Left ventricle myocardium superior (tissue), 1 donor: ENCODE measurements at regions of chr9 and their contacts with region 1.

Region 1: DNA sequence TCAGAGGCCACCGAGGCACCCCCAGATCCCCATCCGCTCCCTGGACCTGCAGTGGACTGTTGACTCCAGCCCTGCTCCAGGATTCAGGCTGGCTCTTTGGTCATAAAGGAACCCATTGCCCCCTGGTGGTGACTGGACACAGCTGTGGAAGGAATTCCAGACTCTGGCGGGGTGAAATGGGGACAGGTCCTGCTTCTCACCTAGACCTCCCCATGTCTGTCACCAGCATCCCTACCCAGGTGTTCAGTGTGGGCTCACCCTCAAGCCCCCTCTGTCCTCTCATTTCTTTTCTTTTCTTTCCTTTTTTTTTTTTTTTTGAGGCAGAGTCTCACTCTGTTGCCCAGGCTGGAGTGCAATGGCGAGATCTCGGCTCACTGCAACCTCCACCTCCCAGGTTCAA is 25.5 kb upstream of the STXBP1 start:
- DNase-seq: peak; percentile 77
- ATAC-seq: peak; percentile 92

Region 2: DNA sequence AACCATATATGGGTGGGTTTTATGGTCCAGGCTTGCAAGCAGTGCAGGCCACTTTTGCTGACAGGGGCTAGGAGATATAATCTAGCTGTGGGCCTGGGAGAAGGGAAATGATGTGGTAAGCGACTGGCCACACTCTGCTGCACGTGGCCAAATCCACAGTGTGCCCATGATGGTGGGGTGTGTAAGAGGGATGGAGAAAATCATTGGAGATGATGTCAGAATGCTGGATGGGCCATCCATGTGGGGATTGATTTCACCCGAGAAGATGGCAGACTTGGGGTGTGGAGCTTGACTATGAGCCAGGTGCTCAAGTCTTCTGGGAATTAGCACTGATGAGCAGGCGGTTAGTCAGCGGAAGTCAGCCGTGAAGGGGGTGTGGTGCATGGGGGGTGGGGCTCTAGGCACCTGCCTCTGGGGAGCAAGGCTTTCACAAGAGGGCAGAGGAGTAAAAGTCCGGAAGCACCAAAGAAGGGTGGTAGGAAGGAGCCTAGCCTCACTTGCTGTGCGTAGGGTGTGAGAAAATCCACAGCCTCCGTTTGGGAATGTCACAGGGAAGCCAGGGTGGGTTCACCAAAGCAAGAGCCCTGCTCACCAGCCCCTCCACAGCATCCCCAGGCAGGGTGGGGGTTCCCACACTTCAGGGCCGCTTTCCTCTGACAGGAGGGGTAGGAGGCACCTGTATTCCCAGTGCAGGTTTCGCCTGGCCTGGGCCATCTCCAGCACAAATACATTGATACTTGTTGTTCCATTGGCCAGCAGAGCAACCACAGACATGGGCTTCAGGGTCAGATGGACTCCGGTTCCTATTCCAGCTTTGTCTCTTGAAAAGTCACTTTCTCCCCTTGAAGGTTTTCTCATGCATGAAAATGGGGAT is 419.6 kb before region 1 on chr9:
- intact Hi-C with region 1: no loop called
- DNase-seq: no peak
- ATAC-seq: no peak

Region 3: DNA sequence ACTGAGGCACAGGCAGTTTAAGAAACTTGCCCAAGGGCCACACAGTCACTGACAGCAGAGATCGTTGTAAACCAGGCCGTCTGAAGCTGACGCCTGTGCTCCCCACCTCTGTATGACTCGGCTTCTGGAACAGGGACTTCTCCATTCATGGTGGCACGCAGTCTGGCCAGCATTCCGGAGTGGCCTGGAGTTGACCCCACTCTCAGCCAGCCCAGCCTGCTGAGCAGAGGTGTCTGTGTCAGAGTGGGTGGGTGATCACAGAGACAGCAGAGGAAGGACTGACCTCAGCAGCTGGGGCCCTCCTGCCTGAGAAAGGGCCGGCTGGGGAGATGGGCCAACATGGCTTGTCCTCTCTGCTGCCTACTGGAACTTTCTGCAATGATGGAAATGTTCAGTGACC is 122.6 kb before region 1 on chr9:
- intact Hi-C with region 1: no loop called
- DNase-seq: peak; percentile 74
- ATAC-seq: peak; percentile 92

Region 4: DNA sequence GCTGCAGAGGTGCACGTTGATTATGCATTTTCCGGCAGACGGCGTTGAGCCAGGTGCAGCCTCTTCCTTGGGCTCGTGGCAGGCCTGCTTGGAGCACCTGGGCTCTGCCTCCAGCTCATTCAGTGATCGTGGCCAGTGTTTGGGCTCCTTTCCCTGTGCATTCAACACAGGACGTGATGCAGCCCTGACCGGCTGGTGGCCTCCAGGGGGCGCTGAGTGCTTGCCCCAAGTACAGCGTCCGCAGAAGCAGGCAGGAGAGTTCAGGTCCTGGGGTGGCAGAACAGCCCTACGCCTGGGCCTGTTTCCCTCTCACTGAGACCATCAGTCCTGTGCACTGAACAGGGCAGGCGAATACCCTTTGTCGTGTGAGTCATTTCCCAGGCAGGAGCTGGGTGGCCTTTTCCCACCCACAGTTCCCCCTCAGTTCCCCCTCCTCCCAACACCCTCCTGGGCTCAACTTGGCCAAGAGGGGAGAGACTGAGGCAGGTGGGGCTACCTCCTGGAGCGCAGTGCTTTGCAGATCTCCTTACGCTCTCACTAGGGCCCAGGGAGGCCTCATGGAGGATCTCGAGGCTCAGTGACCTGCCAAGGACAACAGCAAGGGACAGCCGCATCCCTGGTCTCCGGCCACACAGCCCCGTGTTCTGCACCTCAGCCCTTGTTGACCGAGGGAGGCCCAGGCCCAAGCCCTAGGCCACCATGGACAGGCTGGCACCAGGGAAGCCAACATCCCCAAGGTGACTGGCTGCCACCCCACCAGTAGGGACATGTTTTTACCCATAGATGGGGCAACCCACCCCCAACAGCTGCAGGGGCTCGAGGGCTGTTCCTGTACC is 82.4 kb before region 1 on chr9:
- intact Hi-C with region 1: loop called (anchors 1 kb)
- DNase-seq: peak; percentile 93
- ATAC-seq: peak; percentile 80

Region 5: DNA sequence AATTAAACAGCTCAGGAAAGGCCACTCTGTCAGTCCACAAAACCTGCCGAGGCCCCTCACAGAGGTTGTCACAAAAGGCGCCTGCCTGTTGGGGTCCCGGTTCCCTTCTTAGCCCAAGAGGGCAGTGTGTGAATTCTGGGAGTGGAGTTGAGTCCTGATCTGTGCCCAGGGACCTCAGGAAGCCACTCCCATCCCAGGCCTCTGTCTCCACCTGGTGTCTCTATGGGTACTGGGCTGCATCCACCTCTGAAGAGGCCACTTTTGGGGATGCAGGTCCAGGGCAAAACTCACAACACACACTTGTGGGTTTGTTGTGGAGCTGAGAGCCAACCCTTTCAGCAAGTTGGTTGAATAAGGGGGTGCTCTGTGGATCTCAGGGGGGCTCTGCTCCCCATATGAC is 48.7 kb before region 1 on chr9:
- intact Hi-C with region 1: loop called (anchors 10 kb)
- DNase-seq: no peak
- ATAC-seq: no peak

Region 6: GRCh38 chr9:127734747-127735529 is 148.4 kb after region 1 on chr9 and contains the start of gene TOR2A:
- intact Hi-C with region 1: loop called (anchors 10 kb)
- DNase-seq: peak; percentile 98
- ATAC-seq: peak; percentile 96
- total RNA-seq, gene TOR2A: 3.6 TPM

Region 7: DNA sequence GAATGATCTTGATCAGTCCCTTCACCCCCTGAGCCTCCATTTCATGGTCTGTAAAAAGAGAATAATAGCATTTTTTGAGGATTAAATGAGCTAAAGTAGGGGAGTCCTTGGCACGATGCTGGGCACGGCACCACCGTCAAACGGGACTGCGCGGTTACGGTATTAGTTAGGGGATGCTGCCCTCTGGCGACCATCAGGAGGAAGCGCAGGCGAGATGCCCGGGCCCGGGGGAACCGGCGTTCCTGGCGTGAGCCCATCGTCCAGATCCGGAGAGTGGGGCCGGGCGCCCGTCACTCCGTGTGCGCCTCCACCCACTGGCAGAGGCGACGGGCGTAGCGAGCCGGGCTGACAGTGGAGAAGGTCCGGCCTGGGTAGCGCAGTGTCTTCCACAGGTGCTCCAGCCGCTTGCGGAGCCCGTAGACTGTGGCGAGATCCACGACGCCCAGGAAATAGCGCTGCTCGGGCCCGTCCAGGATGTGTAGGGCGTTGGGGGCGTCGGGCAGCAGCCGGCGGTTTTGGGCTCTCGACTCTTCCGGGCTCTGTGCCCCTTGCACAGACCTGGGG is 335.1 kb after region 1 on chr9:
- intact Hi-C with region 1: loop called (anchors 5 kb)
- DNase-seq: peak; percentile 84
- ATAC-seq: peak; percentile 25